CD8-positive, alpha-beta memory T cell (primary cell): ENCODE measurements at regions of chr14 and their contacts with region 1.

Region 1: DNA sequence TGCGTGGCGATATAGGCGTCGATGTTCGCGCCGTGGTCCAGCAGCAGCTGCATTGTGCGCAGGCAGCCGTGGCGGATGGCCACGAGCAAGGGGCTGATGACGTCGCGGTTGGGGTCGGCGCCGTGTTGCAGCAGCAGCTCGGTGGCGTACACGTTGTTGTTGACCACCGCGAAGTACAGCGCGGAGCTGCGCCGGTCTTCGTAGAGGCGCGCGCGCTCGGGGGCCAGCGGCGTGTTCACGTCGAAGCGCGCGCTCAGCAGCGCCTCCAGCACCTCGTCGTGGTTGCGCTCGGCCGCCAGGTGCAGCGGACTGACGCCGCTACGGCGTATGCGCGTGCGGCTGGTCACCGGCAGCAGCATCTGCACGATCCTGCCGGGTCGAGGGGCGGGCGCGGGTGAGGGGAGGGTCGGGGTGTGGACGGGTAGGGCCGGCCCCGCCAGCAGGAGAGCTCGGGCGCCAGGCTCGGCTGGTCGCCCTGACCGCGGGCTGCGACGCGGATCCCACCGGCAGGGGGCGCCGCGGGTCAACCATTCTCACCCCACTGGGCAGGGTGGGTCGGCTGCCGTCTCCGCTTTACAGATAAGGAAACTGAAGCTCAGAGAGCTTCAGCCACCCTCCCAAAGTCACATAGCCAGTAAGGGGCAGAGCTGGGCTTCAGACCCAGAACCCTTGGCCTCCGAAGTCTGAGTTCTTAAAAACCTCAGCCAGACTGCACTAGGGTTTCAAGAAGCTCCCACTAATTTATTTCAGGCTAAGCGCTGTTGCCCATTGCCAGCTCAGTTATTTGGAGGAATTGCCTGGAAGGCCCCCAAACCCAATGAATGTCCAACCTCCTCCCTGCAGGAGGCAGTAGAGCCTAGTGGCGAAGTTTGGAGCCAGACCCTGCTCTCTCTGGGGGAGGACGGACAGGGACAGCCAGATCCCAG is 12.4 kb downstream of the FAM181A start:
- DNase-seq: peak; percentile 81 to 91 (median 85)
- H3K4me3 ChIP-seq: peak overlapping the region; percentile 45
- H3K4me3 Mint-ChIP-seq: peak overlapping the region; percentile 26 to 87 (median 56)
- H3K27ac ChIP-seq: no peak overlapping the region
- H3K27ac Mint-ChIP-seq: peak overlapping the region in 4 of 8 donors; percentile 23 to 70 (median 31)
- H3K4me1 ChIP-seq: no peaks in the 10 kb centered on the region
- H3K4me1 Mint-ChIP-seq: peaks cover 5 to 21% (median 6%) of the 10 kb centered on the region in 3 donors
- H3K27me3 ChIP-seq: no peaks in the 10 kb centered on the region
- H3K27me3 Mint-ChIP-seq: peaks cover 0 to 4% of the 10 kb centered on the region in 2 donors

Region 2: GRCh38 chr14:93857500-93858283 is 81.9 kb before region 1 on chr14:
- CTCF ChIA-PET with region 1: no interaction called
- POLR2A ChIA-PET with region 1: no interaction called
- DNase-seq: no peak
- H3K4me3 ChIP-seq: no peak overlapping the region
- H3K4me3 Mint-ChIP-seq: no peak overlapping the region
- H3K27ac ChIP-seq: no peak overlapping the region
- H3K27ac Mint-ChIP-seq: no peak overlapping the region
- H3K4me1 ChIP-seq: no peaks in the 10 kb centered on the region
- H3K4me1 Mint-ChIP-seq: no peaks in the 10 kb centered on the region
- H3K27me3 ChIP-seq: no peaks in the 10 kb centered on the region
- H3K27me3 Mint-ChIP-seq: peaks cover 8 to 35% of the 10 kb centered on the region in 2 donors

Region 3: DNA sequence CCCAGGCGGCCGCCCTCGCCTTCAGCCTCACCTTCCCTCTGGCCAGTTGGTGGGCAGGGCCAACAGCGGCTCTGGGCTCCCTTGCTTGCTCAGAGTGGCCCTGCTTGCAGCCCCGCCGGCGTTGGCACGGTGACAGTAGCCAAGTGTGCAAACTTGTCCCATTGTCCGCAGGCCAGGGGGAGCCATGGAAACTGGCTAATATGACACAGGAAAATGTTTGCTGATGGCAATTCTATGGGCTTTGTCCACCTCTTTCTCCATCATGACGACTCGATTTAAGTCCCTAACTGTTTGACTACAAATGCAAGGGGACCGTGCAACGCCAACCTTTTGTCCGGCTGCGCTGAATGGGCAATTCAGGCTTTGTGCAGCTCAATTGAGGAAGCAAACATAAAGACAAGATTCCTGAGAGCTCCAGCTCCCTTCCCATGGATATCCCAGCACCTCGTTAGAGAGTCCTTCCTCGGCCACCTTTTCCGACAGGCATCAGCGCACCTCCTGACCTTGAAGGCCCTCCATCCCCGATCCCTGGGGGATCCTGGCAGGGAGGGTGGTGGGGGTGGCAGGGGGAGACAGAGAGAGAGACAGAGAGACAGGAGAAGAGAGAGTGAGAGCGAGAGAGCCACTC is 13.2 kb before region 1 on chr14:
- CTCF ChIA-PET with region 1: interaction called, 12 read pairs
- POLR2A ChIA-PET with region 1: no interaction called
- DNase-seq: no peak
- H3K4me3 ChIP-seq: no peak overlapping the region
- H3K4me3 Mint-ChIP-seq: no peak overlapping the region
- H3K27ac ChIP-seq: no peak overlapping the region
- H3K27ac Mint-ChIP-seq: no peak overlapping the region
- H3K4me1 ChIP-seq: no peaks in the 10 kb centered on the region
- H3K4me1 Mint-ChIP-seq: no peaks in the 10 kb centered on the region
- H3K27me3 ChIP-seq: no peaks in the 10 kb centered on the region
- H3K27me3 Mint-ChIP-seq: no peaks in the 10 kb centered on the region

Region 4: GRCh38 chr14:93970549-93970946 is 31.0 kb after region 1 on chr14:
- CTCF ChIA-PET with region 1: interaction called, 945 read pairs
- POLR2A ChIA-PET with region 1: interaction called, 21 read pairs
- DNase-seq: peak; percentile 51 to 82 (median 60)
- H3K4me3 ChIP-seq: peak overlapping the region; percentile 75
- H3K4me3 Mint-ChIP-seq: peak overlapping the region; percentile 79 to 91 (median 90)
- H3K27ac ChIP-seq: no peak overlapping the region
- H3K27ac Mint-ChIP-seq: peak overlapping the region; percentile 65 to 96 (median 90)
- H3K4me1 ChIP-seq: peaks cover 15% of the 10 kb centered on the region
- H3K4me1 Mint-ChIP-seq: peaks cover 38 to 92% (median 57%) of the 10 kb centered on the region in 3 donors
- H3K27me3 ChIP-seq: no peaks in the 10 kb centered on the region
- H3K27me3 Mint-ChIP-seq: peaks cover 0 to 2% of the 10 kb centered on the region in 2 donors

Region 5: DNA sequence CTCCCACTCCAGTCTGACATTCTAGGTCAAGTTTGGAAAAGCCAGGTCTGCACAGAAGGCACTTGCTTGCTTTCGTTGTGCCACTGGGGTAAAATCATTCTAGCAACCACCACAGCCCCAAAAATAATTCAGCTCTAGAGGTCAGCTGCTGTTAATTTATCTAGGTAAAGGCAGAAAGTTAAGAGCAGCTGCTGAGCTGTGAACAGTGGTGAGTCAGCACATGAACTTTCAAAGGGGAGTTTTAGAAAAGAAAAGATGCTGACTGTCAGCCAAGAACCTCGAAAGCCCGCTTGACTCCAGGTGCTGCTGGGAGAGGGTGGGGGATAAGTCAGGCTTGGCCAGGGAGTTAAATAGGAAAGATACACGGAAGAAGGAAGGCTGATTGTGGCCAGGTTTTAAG is 70.2 kb after region 1 on chr14:
- CTCF ChIA-PET with region 1: interaction called, 272 read pairs
- POLR2A ChIA-PET with region 1: interaction called, 4 read pairs
- DNase-seq: no peak
- H3K4me3 ChIP-seq: no peak overlapping the region
- H3K4me3 Mint-ChIP-seq: peak overlapping the region in 1 of 7 donors; percentile 10
- H3K27ac ChIP-seq: no peak overlapping the region
- H3K27ac Mint-ChIP-seq: peak overlapping the region in 1 of 8 donors; percentile 75
- H3K4me1 ChIP-seq: peaks cover 20% of the 10 kb centered on the region
- H3K4me1 Mint-ChIP-seq: peaks cover 38 to 49% (median 48%) of the 10 kb centered on the region in 3 donors
- H3K27me3 ChIP-seq: peaks cover 6% of the 10 kb centered on the region
- H3K27me3 Mint-ChIP-seq: peaks cover 0 to 10% of the 10 kb centered on the region in 2 donors

Region 6: GRCh38 chr14:94036313-94037050 is 96.9 kb after region 1 on chr14:
- CTCF ChIA-PET with region 1: interaction called, 16 read pairs
- POLR2A ChIA-PET with region 1: no interaction called
- DNase-seq: peak; percentile 60 to 80 (median 63)
- H3K4me3 ChIP-seq: no peak overlapping the region
- H3K4me3 Mint-ChIP-seq: no peak overlapping the region
- H3K27ac ChIP-seq: no peak overlapping the region
- H3K27ac Mint-ChIP-seq: peak overlapping the region in 2 of 8 donors; percentile 47 to 85
- H3K4me1 ChIP-seq: no peaks in the 10 kb centered on the region
- H3K4me1 Mint-ChIP-seq: peaks cover 3 to 7% (median 5%) of the 10 kb centered on the region in 3 donors
- H3K27me3 ChIP-seq: no peaks in the 10 kb centered on the region
- H3K27me3 Mint-ChIP-seq: no peaks in the 10 kb centered on the region

Region 7: DNA sequence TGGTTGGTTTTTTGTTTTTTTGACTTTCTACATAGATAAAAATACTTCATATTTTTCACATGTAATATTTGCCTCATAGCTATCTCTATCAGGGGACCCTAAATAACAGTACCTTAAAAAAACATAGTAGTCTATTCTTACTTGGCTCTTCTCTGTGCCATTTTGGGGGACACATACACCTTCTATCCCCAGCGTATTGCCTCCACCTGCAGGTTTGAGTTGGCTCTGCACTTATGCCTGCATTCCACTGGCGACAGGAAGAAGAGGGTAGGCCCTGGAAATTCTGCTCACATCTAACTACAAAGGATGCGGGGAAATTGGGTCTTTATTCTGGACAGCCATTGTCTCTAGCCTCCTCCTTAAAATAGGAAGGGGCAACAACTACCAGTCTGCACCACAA is 203.7 kb after region 1 on chr14:
- CTCF ChIA-PET with region 1: interaction called, 11 read pairs
- POLR2A ChIA-PET with region 1: no interaction called
- DNase-seq: no peak
- H3K4me3 ChIP-seq: no peak overlapping the region
- H3K4me3 Mint-ChIP-seq: no peak overlapping the region
- H3K27ac ChIP-seq: no peak overlapping the region
- H3K27ac Mint-ChIP-seq: peak overlapping the region in 1 of 8 donors; percentile 14
- H3K4me1 ChIP-seq: no peaks in the 10 kb centered on the region
- H3K4me1 Mint-ChIP-seq: peaks cover 17 to 27% (median 18%) of the 10 kb centered on the region in 3 donors
- H3K27me3 ChIP-seq: no peaks in the 10 kb centered on the region
- H3K27me3 Mint-ChIP-seq: peaks cover 0 to 4% of the 10 kb centered on the region in 2 donors